Heart right ventricle (tissue), 16 donors: ENCODE measurements at regions of chr2 and their contacts with region 1.

Region 1: DNA sequence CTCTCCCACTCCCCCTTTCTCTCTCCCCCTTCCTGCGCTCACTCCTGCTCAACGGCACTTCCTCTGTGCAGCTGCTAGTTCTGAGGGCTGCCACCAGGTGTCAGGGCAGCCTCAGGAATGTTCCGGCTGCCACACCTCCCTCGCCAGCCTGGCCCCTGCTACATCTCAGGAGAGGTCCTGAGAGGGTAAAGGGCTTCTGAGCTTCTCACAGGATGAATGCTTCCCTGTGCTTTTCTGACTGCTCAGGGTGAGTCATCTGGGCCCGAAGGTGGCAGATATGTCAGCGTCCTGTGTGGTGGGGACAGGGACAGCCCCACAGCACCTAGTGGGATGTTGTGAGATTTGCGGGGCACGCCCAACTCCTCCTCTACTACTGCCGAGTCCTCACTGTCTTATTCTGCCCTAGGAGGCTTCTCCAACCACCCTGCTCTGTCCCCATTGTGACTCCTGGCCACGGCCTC is 49.0 kb downstream of the PLEKHB2 start:
- DNase-seq: peak; percentile 23 to 46
- ATAC-seq: peak; percentile 78 to 92 (median 86)
- H3K4me3 ChIP-seq: no peak overlapping the region
- H3K27ac ChIP-seq: no peak overlapping the region
- H3K4me1 ChIP-seq: no peaks in the 10 kb centered on the region
- H3K27me3 ChIP-seq: no peaks in the 10 kb centered on the region
- CTCF ChIP-seq: peak; percentile 48 to 81 (median 77)

Region 2: GRCh38 chr2:131402320-131403039 is 248.4 kb after region 1 on chr2:
- intact Hi-C with region 1: loop called in 1 of 10 experiments (anchors 10 kb)
- DNase-seq: no peak
- ATAC-seq: no peak
- H3K4me3 ChIP-seq: no peak overlapping the region
- H3K27ac ChIP-seq: no peak overlapping the region
- H3K4me1 ChIP-seq: no peaks in the 10 kb centered on the region
- H3K27me3 ChIP-seq: peaks cover 0 to 65% (median 19%) of the 10 kb centered on the region in 7 donors
- CTCF ChIP-seq: no peak

Region 3: DNA sequence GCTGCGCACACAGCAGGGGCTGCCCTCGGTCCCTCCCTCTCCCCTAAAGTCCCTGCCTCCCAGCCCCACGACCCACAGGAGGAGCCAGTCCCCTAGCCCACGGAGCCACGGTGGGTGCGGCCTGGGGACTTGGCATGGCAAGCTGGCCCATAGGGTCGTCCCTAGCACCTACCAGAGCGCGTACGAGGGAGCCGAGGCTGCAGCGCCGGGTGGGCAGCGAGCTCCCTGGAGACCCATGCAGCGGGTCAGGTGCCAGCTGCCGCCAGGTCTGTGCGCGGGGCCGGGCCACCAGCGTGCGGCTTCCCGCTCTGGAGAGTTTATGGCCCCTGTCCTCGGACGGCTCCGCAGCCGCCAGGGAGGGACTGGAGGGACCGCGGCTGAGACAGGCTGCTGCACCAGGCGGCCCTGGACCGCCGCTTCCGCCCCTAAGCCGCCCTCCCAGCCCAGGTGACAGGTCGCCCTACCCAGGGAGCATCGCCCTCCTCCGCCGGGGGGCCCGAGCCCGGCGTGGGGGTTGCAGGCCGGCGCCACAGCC is 647.2 kb after region 1 on chr2:
- intact Hi-C with region 1: loop called in 1 of 10 experiments (anchors 10 kb)
- DNase-seq: peak in 1 of 2 donors; percentile 19
- ATAC-seq: no peak
- H3K4me3 ChIP-seq: peak overlapping the region in 6 of 10 donors; percentile 33 to 50 (median 41)
- H3K27ac ChIP-seq: no peak overlapping the region
- H3K4me1 ChIP-seq: peaks cover 0 to 13% (median 4%) of the 10 kb centered on the region in 9 donors
- H3K27me3 ChIP-seq: peaks cover 0 to 18% (median 7%) of the 10 kb centered on the region in 7 donors
- CTCF ChIP-seq: no peak